ENCODE measurements at regions of chr21 and their contacts with region 1.

Region 1: GRCh38 chr21:43810505-43811261 is 21.3 kb downstream of the RRP1 start:
- DNase-seq: peak; percentile 97
- CTCF ChIP-seq: peak; percentile 93

Region 2: GRCh38 chr21:43939443-43940328 is 129.0 kb after region 1 on chr21:
- in situ Hi-C with region 1: loop called (anchors 10 kb)
- DNase-seq: no peak
- CTCF ChIP-seq: peak; percentile 21

Region 3: DNA sequence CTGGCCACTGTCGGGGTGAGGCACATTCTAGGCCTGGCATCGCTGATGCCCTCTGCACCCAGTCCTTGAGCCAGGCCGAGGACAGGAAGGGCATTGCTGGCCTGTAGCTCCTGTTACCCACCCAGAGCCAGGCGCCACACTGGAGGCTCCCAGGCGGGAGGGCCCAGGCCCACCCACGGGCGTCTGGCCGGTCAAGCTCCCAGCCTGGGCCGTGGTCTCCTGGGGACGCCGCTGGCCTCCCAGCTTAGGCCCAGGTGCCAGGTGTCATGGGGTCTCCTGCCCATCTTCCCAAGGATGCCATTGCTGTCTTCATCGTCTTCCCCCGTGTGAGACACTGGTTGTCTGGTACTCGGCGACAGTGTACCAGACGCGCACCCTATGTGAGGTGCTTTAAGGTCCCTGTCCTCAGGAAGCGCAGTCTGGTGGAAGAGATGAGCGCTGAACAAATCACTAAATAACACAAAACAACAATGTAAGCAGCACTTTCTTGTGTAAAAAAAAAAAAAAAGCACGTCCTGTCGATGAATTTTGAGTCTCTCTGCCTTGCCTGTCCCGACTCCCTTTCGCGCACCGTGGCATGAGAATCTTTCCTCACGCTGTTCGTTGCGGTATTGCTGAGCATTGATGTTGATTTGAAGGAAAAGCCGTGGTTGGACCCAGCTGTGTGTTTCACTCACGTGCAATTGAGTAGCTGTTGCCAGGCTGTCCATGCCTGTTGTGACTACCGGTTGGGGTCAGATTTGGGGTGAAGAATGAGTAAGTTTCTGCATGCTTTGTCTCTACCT is 174.4 kb after region 1 on chr21:
- in situ Hi-C with region 1: loop called (anchors 10 kb)
- DNase-seq: no peak
- CTCF ChIP-seq: no peak

Region 4: DNA sequence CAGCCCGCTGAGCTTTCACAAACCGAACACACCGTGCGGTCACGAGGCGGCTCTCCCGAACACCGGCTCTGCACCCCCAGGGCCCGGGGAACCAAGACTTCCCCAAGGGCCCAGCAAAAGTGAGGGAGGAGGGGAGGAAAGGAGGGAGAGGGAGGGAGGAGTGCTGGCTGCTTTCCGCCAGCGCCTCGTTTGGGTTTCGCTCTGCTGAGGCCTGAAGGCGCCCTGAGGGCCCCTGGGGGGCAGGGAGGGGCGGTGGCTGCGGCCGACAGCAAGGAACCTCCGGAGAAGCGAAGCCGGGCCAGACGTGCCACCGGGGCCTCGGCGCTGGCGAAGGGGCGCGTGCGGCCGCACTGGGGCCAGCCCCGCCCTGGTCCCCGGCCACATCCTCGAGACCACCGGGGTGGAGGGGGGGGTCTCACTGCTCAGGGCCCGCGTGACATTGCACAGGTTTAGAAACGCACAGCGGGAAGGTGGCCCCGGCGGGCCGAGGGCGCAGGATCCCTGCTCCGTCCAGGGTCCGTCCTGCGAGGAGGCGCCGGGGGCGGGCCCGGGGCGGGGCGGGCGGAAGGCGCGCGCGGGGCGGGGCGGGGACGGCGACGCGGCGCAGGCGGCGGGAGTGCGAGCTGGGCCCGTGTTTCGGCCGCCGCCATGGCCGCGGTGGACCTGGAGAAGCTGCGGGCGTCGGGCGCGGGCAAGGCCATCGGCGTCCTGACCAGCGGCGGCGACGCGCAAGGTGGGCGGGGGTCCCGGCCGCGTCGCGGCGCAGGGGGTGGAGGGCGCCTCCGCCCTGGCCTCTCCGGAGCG is 489.0 kb after region 1 on chr21 and contains the start of gene PFKL:
- in situ Hi-C with region 1: loop called (anchors 25 kb)
- DNase-seq: peak; percentile 94
- CTCF ChIP-seq: no peak